ENCODE measurements at regions of chr4 and their contacts with region 1.

Region 1: DNA sequence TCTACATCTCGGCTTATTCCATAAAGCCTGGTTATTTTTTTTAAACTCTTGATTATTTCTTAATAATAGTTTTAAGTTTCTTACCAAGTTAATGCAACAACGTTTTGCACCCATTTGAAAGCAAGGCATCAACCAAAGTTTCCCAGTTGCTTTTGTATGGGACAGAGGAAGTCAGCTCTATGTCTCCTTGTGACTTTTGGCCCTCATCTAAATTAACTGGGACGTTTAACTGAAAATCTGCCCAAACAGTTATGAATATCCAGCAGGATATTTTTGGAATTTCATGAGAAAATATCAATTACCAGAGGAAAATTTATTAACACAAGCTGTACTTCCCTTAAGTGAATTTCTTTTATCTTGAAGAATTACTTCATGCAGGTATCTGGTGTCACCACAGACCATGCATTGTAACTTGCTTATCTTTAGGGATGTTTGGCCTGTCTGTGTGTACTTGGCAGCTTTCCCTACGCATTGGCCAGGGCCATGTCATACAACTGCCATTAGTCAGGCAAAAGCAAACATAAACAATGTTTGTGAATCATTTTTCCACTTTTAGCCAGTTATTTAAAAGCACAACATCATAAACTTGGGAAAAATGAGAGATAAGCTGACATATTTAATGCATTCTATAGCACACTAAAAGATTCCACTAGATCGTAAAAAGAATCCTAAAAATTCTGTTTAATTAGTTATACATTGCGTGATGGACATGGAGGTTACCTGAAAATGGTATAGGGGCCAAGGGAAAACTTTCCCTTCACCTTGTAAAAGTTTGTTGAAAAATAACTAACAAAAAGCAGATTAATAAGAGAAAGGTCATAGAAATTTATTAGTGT is 101.4 kb upstream of the PDE5A start:
- DNase-seq: peak; percentile 77
- H3K4me3 Mint-ChIP-seq: peak overlapping the region; percentile 28
- H3K27ac Mint-ChIP-seq: peak overlapping the region; percentile 96
- H3K4me1 Mint-ChIP-seq: peaks cover 83% of the 10 kb centered on the region
- H3K27me3 Mint-ChIP-seq: no peaks in the 10 kb centered on the region
- CTCF ChIP-seq: no peak

Region 2: GRCh38 chr4:119697887-119698393 is 32.1 kb before region 1 on chr4:
- CTCF ChIA-PET with region 1: interaction called, 5 read pairs
- intact Hi-C with region 1: loop called (anchors 1 kb)
- DNase-seq: peak; percentile 20
- H3K4me3 Mint-ChIP-seq: peak overlapping the region; percentile 30
- H3K27ac Mint-ChIP-seq: peak overlapping the region; percentile 93
- H3K4me1 Mint-ChIP-seq: peaks cover 39% of the 10 kb centered on the region
- H3K27me3 Mint-ChIP-seq: no peaks in the 10 kb centered on the region
- CTCF ChIP-seq: no peak

Region 3: GRCh38 chr4:119785963-119786362 is 55.9 kb after region 1 on chr4:
- CTCF ChIA-PET with region 1: no interaction called
- intact Hi-C with region 1: loop called (anchors 5 kb)
- DNase-seq: peak; percentile 42
- H3K4me3 Mint-ChIP-seq: no peak overlapping the region
- H3K27ac Mint-ChIP-seq: no peak overlapping the region
- H3K4me1 Mint-ChIP-seq: no peaks in the 10 kb centered on the region
- H3K27me3 Mint-ChIP-seq: no peaks in the 10 kb centered on the region
- CTCF ChIP-seq: peak; percentile 54

Region 4: DNA sequence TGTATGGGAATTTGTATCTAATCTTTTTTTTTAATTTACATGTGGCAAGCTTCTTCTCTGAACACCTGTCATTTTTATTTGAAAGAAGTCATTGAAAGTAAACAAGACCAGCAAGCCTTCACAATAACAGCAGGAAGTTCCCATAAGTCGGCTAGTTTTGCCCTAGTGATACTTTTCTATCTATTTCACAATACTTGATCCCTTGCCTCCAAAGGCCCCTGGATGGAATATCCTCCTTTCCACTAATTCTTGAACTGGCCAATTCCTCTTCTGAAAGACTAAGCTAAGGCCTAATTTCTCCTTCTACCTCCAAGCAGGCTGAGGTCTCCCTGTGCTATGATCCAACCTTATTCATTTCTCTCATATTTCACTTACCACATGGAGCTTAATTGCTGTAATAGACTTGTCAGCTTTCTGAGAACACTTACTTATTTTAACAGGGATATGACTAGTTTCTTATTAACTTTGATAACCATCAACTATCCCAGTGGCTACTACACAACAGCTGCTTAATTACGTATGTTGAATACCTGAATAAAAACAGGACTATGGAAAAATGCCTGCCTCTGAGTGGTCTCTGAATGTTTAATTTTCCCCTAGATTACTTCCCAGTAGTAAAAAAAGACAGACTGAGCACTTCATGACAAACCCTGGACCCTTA is 142.4 kb after region 1 on chr4:
- CTCF ChIA-PET with region 1: no interaction called
- intact Hi-C with region 1: loop called (anchors 5 kb)
- DNase-seq: peak; percentile 3
- H3K4me3 Mint-ChIP-seq: peak overlapping the region; percentile 22
- H3K27ac Mint-ChIP-seq: peak overlapping the region; percentile 92
- H3K4me1 Mint-ChIP-seq: peaks cover 23% of the 10 kb centered on the region
- H3K27me3 Mint-ChIP-seq: no peaks in the 10 kb centered on the region
- CTCF ChIP-seq: no peak